WTC11 (cell line): ENCODE measurements at regions of chr1 and their contacts with region 1.

Region 1: DNA sequence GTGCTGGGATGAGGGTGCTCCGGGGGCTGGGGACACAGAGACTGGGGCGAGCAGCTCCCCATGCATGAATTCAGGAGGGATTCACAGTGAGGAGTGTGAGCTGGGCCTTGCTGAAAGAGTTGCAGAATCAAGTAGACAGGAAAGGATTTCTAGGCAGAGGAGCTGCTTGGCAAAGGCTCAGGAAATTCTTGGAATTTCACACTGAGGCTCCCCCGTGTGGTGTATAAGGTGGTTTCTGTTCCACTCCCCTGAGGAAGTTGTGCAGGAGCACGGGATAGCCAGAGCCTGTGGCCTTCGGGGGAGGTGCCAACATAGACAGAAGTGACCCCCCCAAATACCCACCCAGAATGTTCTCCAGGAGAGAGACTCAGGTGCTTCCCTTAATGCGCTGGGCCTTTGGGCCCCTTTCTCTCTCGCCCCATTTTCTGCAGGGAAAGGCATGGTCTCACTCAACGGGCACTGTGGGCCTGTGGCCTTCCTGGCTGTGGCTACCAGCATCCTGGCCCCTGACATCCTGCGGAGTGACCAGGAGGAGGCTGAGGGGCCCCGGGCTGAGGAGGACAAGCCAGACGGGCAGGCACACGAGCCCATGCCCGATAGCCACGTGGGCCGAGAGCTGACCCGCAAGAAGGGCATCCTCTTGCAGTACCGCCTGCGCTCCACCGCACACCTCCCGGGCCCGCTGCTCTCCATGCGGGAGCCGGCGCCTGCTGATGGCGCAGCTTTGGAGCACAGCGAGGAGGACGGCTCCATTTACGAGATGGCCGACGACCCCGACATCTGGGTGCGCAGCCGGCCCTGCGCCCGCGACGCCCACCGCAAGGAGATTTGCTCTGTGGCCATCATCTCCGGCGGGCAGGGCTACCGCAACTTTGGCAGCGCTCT is 58.5 kb upstream of the ACTL8 start:
- DNase-seq: peak; percentile 68
- ATAC-seq: peak; percentile 81
- H3K4me3 Mint-ChIP-seq: no peak overlapping the region
- H3K27ac Mint-ChIP-seq: peak overlapping the region; percentile 90
- H3K4me1 Mint-ChIP-seq: peaks cover 18% of the 10 kb centered on the region
- H3K27me3 Mint-ChIP-seq: no peaks in the 10 kb centered on the region
- CTCF ChIP-seq: no peak

Region 2: DNA sequence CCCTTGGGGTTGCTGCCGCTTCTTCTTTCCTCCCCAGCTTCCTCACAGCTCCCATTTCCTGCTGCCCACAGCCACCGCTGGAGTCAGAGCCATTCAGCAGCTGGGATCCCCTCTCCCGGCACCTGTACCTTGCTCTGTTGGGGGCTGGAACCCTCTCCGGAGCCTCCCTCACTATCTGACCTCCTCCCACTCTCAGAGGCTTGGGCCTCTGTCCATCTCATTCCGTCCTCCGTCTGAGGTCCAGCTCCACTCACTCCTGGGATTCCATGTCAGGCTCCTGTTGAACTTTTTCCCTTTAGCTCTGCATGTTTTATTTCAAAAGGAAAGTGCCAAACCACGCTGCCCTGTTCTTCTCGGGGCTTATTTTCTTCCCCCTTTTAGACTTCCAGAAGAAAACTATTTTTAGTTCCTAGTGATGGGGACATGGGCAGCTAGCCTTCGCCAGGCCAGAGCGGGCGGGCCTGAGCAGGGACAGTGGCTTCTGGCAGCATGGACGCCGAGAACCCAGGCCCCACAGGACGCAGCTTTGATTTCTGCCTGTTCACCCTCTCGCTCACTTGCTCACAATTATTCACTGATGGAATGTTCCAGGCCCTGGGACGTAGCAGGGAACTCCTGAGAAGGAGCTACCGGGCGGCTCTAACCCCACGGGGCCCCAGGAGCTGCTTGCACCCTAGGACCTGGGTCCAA is 78.0 kb before region 1 on chr1:
- CTCF ChIA-PET with region 1: no interaction called
- POLR2A ChIA-PET with region 1: no interaction called
- DNase-seq: no peak
- ATAC-seq: no peak
- H3K4me3 Mint-ChIP-seq: no peak overlapping the region
- H3K27ac Mint-ChIP-seq: peak overlapping the region; percentile 45; the same call in 1 of the 2 replicates
- H3K4me1 Mint-ChIP-seq: no peaks in the 10 kb centered on the region
- H3K27me3 Mint-ChIP-seq: no peaks in the 10 kb centered on the region
- CTCF ChIP-seq: no peak

Region 3: DNA sequence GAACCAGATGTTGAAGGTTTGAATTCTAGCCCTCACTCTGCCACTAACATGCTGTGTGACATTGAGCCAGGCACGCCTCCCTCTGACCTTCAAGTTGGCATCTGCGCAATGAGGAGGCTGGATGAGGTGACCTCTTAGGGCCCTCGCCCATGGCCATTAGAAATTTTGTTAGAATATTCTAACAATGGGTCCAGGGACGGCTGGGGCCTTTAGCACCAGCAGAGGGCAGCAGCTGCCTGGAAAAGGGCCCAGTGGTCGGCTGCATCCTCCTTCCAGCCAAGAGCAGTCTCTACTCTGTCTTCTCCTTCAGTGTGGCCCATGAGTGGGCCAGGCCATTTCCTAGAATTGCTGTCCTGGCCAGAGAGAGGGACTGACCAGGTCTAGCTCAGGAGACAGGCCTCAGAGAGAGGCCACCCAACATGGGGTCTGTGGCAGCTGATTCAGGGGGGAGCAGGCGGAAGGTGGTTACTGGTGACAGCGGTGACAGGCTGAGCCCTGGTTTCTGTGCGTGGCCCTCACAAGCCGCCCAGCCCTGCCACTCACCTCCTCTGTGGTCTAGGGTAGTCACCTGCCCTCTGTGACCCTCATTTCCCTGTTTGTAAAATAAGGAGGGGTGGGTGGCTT is 42.8 kb before region 1 on chr1:
- CTCF ChIA-PET with region 1: interaction called, 11 read pairs
- POLR2A ChIA-PET with region 1: no interaction called
- DNase-seq: peak; percentile 72
- ATAC-seq: peak; percentile 87
- H3K4me3 Mint-ChIP-seq: no peak overlapping the region
- H3K27ac Mint-ChIP-seq: no peak overlapping the region
- H3K4me1 Mint-ChIP-seq: no peaks in the 10 kb centered on the region
- H3K27me3 Mint-ChIP-seq: no peaks in the 10 kb centered on the region
- CTCF ChIP-seq: peak; percentile 61; the same call in 1 of the 2 replicates

Region 4: GRCh38 chr1:17671741-17672140 is 24.9 kb before region 1 on chr1:
- CTCF ChIA-PET with region 1: interaction called, 10 read pairs
- POLR2A ChIA-PET with region 1: no interaction called
- DNase-seq: peak; percentile 48
- ATAC-seq: peak; percentile 54
- H3K4me3 Mint-ChIP-seq: no peak overlapping the region
- H3K27ac Mint-ChIP-seq: no peak overlapping the region
- H3K4me1 Mint-ChIP-seq: peaks cover 22% of the 10 kb centered on the region
- H3K27me3 Mint-ChIP-seq: no peaks in the 10 kb centered on the region
- CTCF ChIP-seq: no peak

Region 5: GRCh38 chr1:17682399-17682798 is 14.3 kb before region 1 on chr1:
- CTCF ChIA-PET with region 1: interaction called, 27 read pairs
- POLR2A ChIA-PET with region 1: no interaction called
- DNase-seq: no peak
- ATAC-seq: no peak
- H3K4me3 Mint-ChIP-seq: no peak overlapping the region
- H3K27ac Mint-ChIP-seq: peak overlapping the region; percentile 64
- H3K4me1 Mint-ChIP-seq: peaks cover 10% of the 10 kb centered on the region; the same call in 1 of the 2 replicates
- H3K27me3 Mint-ChIP-seq: no peaks in the 10 kb centered on the region
- CTCF ChIP-seq: no peak

Region 6: GRCh38 chr1:17725084-17725719 is 28.5 kb after region 1 on chr1:
- CTCF ChIA-PET with region 1: interaction called, 10 read pairs
- POLR2A ChIA-PET with region 1: interaction called, 10 read pairs
- DNase-seq: no peak
- ATAC-seq: no peak
- H3K4me3 Mint-ChIP-seq: no peak overlapping the region
- H3K27ac Mint-ChIP-seq: no peak overlapping the region
- H3K4me1 Mint-ChIP-seq: no peaks in the 10 kb centered on the region
- H3K27me3 Mint-ChIP-seq: no peaks in the 10 kb centered on the region; the same call in 1 of the 2 replicates
- CTCF ChIP-seq: no peak

Region 7: DNA sequence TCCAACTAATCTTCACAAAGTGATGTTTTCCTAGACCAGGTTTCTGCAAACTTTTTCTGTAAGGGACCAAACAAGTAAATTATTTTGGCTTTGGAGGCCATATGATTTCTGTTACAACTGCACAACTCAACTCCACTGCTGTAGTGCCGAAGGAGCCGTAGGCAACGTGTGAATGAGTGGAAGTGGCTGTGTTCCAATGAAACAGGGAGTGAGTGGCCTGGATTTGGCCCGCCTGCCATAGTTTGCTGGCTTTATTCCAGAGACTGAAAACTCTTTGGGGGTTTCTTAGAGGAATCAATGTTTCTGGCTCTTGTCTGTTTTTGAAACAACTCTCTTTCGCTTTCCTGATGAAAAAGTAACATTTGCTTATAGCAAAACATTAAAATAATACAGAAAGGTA is 45.9 kb after region 1 on chr1:
- CTCF ChIA-PET with region 1: interaction called, 17 read pairs
- POLR2A ChIA-PET with region 1: no interaction called
- DNase-seq: no peak
- ATAC-seq: no peak
- H3K4me3 Mint-ChIP-seq: no peak overlapping the region
- H3K27ac Mint-ChIP-seq: no peak overlapping the region
- H3K4me1 Mint-ChIP-seq: peaks cover 8% of the 10 kb centered on the region
- H3K27me3 Mint-ChIP-seq: no peaks in the 10 kb centered on the region; the same call in 1 of the 2 replicates
- CTCF ChIP-seq: no peak

Region 8: GRCh38 chr1:17909634-17910033 is 213.0 kb after region 1 on chr1:
- CTCF ChIA-PET with region 1: interaction called, 10 read pairs
- POLR2A ChIA-PET with region 1: no interaction called
- DNase-seq: peak; percentile 74
- ATAC-seq: peak; percentile 90
- H3K4me3 Mint-ChIP-seq: no peak overlapping the region
- H3K27ac Mint-ChIP-seq: no peak overlapping the region
- H3K4me1 Mint-ChIP-seq: peaks cover 11% of the 10 kb centered on the region
- H3K27me3 Mint-ChIP-seq: peaks cover 12% of the 10 kb centered on the region
- CTCF ChIP-seq: no peak

Region 9: GRCh38 chr1:17919525-17920439 is 223.1 kb after region 1 on chr1:
- CTCF ChIA-PET with region 1: no interaction called
- POLR2A ChIA-PET with region 1: no interaction called
- DNase-seq: peak; percentile 65
- ATAC-seq: peak; percentile 74
- H3K4me3 Mint-ChIP-seq: no peak overlapping the region
- H3K27ac Mint-ChIP-seq: no peak overlapping the region
- H3K4me1 Mint-ChIP-seq: peaks cover 17% of the 10 kb centered on the region
- H3K27me3 Mint-ChIP-seq: peaks cover 8% of the 10 kb centered on the region
- CTCF ChIP-seq: no peak